ENCODE measurements at regions of chr14 and their contacts with region 1.

Region 1: DNA sequence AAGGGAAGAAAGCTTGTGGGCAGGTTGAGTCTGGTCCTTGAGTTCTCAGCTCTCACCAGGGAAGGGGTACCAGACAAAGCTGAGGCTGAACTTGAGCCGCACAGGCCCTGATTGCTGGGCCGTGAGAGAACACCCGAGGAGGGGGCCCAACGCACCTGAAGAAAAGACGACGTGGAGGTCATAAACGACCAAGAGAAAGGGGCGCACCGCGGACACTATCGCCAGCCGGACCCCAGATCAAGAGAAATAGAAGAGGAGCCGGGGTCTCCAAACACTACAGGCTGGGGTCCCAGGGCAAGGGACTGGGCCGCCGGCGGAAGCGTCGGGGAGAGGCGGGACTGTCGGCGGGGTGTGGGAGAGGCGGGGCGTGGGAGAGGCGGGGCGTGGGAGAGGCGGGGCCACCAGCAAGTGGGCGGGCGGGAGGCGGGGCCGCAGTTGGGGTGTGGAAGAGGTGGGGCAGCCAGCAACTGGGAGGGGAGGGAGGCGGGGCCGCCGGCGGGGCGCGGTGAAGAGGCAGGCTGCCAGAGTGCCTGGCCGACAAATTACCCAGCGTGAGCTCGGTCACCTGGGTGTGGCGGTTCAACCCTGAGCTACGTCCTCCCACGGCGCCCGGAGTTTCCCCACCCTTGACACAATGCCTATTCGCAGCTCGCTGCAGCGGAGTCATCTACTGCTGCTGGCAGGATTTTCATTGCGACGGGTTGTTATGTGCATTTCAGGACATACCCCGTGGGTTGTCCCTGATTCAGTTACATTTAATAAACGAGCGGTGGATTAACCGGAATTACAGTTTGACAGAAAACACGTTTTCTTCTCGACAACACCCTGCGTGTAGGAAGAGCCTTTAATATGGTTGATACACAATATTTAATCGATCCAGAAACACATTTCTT is 15.5 kb upstream of the NEMF start:
- DNase-seq: peak; percentile 99
- H3K4me3 ChIP-seq: peak overlapping the region; percentile 40 to 73 (median 63)
- H3K27ac ChIP-seq: peak overlapping the region; percentile 87 to 99 (median 96)
- H3K4me1 ChIP-seq: peaks cover 5 to 41% (median 29%) of the 10 kb centered on the region in 4 donors
- H3K27me3 ChIP-seq: no peaks in the 10 kb centered on the region
- CTCF ChIP-seq: no peak
- EP300 ChIP-seq: peak; percentile 70
- POLR2A ChIP-seq: peak; percentile 96

Region 2: GRCh38 chr14:49754570-49755097 is 113.4 kb before region 1 on chr14:
- in situ Hi-C with region 1: no loop called
- intact Hi-C with region 1: no loop called
- DNase-seq: no peak
- H3K4me3 ChIP-seq: no peak overlapping the region
- H3K27ac ChIP-seq: no peak overlapping the region
- H3K4me1 ChIP-seq: no peaks in the 10 kb centered on the region
- H3K27me3 ChIP-seq: no peaks in the 10 kb centered on the region
- CTCF ChIP-seq: no peak
- EP300 ChIP-seq: no peak
- POLR2A ChIP-seq: no peak

Region 3: DNA sequence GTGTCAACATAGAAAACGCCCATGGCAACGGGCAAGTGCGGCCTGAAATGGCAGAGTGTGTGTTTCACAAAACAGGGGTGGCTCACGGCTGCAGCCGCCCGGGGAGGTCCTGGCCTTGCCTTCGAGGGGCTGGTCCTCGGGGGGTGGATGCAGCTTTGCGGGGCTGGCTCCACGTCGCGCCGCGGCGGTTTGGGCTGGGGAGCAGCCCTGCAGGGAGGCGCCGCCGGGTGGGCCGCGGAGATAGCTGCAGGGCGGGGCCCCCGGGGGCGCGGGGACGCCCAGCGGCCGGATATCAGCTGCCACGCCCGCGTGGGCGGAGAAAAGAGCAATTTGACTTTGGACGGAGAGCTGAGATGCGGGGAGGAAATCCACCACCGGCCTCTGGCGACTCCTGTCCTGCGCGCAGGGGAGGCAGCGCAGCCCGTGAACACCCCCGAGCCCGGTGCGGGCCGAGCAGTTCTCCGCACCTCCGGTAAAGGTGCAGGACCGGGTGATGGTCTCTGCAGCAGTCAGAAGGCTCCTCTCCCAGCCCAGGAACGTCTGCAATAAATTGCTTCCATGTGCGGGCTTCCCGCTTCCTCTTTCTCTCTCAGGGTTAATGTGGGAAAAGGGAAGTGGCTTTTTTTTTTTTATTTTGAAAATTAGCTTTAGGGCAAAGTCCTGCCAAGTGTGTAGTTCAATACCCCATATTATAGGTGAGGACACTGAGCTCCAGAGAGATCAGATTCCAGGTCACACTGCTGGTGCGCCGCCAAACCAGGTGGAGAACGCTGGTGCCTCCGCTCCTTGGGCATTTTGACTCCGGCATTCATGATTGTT is 135.3 kb after region 1 on chr14:
- in situ Hi-C with region 1: loop called in 2 of 4 experiments (anchors 10 kb)
- intact Hi-C with region 1: no loop called
- DNase-seq: peak; percentile 95
- H3K4me3 ChIP-seq: peak overlapping the region; percentile 16 to 64 (median 44)
- H3K27ac ChIP-seq: peak overlapping the region; percentile 90 to 94 (median 92)
- H3K4me1 ChIP-seq: peaks cover 42 to 70% (median 61%) of the 10 kb centered on the region in 4 donors
- H3K27me3 ChIP-seq: no peaks in the 10 kb centered on the region
- CTCF ChIP-seq: peak; percentile 8 to 57 (median 29)
- EP300 ChIP-seq: no peak
- POLR2A ChIP-seq: peak; percentile 91

Region 4: DNA sequence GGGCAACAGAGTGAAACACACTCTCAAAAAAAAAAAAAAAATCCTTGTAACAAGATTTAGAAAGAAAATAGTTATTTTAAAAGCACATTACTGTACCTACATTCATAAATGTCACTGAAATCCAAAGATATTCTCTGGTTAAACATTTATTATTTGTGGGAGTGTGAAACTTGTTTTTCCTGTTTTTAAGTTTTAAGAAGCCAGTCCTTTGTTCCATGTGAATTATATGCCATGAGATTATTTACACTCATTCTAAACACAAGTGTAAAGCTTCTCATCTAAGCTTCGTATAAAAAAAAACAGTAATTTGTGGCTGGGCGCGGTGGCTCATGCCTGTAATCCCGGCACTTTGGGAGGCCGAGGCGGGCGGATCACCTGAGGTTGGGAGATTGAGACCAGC is 233.3 kb after region 1 on chr14:
- in situ Hi-C with region 1: loop called in 2 of 4 experiments (anchors 5 to 10 kb)
- intact Hi-C with region 1: loop called (anchors 5 kb)
- DNase-seq: no peak
- H3K4me3 ChIP-seq: no peak overlapping the region
- H3K27ac ChIP-seq: peak overlapping the region; percentile 76 to 81 (median 78)
- H3K4me1 ChIP-seq: peaks cover 4 to 40% (median 17%) of the 10 kb centered on the region in 4 donors
- H3K27me3 ChIP-seq: no peaks in the 10 kb centered on the region
- CTCF ChIP-seq: no peak
- EP300 ChIP-seq: no peak
- POLR2A ChIP-seq: no peak

Region 5: GRCh38 chr14:50109342-50109741 is 241.3 kb after region 1 on chr14:
- in situ Hi-C with region 1: loop called in 3 of 4 experiments (anchors 5 to 10 kb)
- intact Hi-C with region 1: loop called (anchors 5 kb)
- DNase-seq: no peak
- H3K4me3 ChIP-seq: no peak overlapping the region
- H3K27ac ChIP-seq: no peak overlapping the region
- H3K4me1 ChIP-seq: peaks cover 0 to 8% (median 4%) of the 10 kb centered on the region in 4 donors
- H3K27me3 ChIP-seq: no peaks in the 10 kb centered on the region
- CTCF ChIP-seq: no peak
- EP300 ChIP-seq: no peak
- POLR2A ChIP-seq: no peak

Region 6: GRCh38 chr14:50116181-50116956 is 248.3 kb after region 1 on chr14 and contains the start of gene VCPKMT:
- in situ Hi-C with region 1: loop called in 1 of 4 experiments (anchors 10 kb)
- intact Hi-C with region 1: no loop called
- DNase-seq: peak; percentile 96
- H3K4me3 ChIP-seq: peak within 1 kb of the TSS; percentile 68 to 95 (median 79)
- H3K27ac ChIP-seq: peak within 1 kb of the TSS; percentile 83 to 97 (median 89)
- H3K4me1 ChIP-seq: peaks cover 8 to 22% (median 13%) of the 10 kb centered on the region in 4 donors
- H3K27me3 ChIP-seq: no peaks in the 10 kb centered on the region
- CTCF ChIP-seq: no peak
- EP300 ChIP-seq: no peak
- POLR2A ChIP-seq: peak; percentile 87
- total RNA-seq, gene VCPKMT: 3.7 to 12.1 (median 5.9) TPM